ENCODE measurements at regions of chr6 and their contacts with region 1.

Region 1: GRCh38 chr6:148250975-148251685 is 91.5 kb upstream of the SASH1 start:
- DNase-seq: no peak
- ATAC-seq: no peak
- H3K4me3 Mint-ChIP-seq: no peak overlapping the region
- H3K27ac Mint-ChIP-seq: no peak overlapping the region
- H3K4me1 Mint-ChIP-seq: no peaks in the 10 kb centered on the region
- H3K27me3 Mint-ChIP-seq: peaks cover 9% of the 10 kb centered on the region

Region 2: DNA sequence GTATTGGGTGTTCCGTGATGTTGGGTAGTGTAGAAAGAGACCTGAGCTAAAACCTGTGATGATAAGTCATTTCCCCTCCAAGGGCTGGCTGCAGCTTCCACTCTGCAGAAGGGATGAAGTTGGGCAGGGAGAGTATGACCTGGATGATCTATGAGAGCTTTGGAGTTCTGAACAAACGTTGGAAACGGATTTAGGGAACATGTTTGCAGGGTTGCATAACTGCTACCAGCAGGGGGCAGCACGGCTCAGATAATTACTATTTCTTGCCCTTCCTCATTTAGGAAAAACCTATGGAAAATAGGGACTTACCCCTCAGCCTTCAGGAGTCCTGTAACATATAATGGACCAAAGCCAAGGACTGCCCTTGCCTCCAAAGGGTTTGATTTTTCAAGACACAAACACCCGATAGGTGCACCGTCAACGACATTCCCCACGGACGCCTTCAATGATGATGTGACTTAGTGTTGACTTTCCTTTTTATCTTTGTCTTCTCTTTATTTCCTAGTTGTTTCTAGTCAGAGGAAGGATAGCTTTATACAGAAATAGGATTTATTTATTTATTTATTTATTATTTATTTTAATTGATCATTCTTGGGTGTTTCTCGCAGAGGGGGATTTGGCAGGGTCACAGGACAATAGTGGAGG is 73.4 kb before region 1 on chr6:
- CTCF ChIA-PET with region 1: interaction called, 15 read pairs
- POLR2A ChIA-PET with region 1: no interaction called
- intact Hi-C with region 1: loop called (anchors 1 kb)
- DNase-seq: peak; percentile 63
- ATAC-seq: no peak
- H3K4me3 Mint-ChIP-seq: no peak overlapping the region
- H3K27ac Mint-ChIP-seq: no peak overlapping the region
- H3K4me1 Mint-ChIP-seq: no peaks in the 10 kb centered on the region
- H3K27me3 Mint-ChIP-seq: peaks cover 24% of the 10 kb centered on the region